ENCODE measurements at regions of chr17 and their contacts with region 1.

Region 1: GRCh38 chr17:58352014-58352842 is at the start of gene SUPT4H1:
- DNase-seq: peak; percentile 93
- ATAC-seq: peak; percentile 92
- H3K4me3 Mint-ChIP-seq: peak within 1 kb of the TSS; percentile 98
- H3K27ac Mint-ChIP-seq: peak within 1 kb of the TSS; percentile 96
- H3K4me1 Mint-ChIP-seq: peaks cover 50% of the 10 kb centered on the region
- H3K27me3 Mint-ChIP-seq: no peaks in the 10 kb centered on the region
- total RNA-seq, gene SUPT4H1: 63.3 to 127 TPM

Region 2: DNA sequence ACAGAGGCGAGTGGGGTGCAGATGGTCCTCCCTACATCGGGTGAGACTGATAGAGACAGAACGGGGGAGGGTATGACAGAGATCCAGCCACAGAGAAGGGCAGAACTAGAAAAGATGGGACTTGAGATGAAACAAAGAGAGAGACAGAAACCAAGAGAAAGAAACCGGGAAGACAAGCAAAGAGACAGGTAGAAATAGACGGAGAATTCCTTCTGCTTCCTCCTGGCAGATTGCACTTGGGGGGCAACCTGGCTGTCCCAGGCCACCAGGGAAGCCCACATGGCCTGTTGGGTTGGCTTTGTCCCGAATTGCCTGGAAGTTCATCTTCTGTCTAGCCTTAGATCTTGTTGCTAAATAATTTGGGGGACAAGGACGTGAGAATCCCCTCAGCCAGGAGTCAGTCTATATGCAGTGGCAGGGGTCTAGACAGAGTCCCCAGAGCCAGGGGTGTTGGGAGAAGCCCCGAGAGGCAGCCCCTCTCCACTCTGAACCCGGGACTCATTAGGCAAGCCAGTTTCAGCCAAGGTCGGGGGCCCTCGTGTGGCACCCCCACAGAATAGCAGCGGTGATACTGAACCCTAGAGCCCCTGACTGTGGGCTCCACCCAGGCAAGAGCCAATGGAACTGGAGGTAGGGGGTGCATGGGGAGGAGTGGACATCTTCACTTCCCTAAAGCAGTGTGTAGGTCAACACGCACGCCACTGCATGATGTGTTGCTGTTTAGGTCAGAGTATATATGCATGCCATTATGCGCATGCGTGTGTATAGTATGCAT is 23.0 kb before region 1 on chr17:
- CTCF ChIA-PET with region 1: interaction called, 21 read pairs
- DNase-seq: peak; percentile 94
- ATAC-seq: peak; percentile 25
- H3K4me3 Mint-ChIP-seq: peak overlapping the region; percentile 83
- H3K27ac Mint-ChIP-seq: peak overlapping the region; percentile 99
- H3K4me1 Mint-ChIP-seq: peaks cover 35% of the 10 kb centered on the region
- H3K27me3 Mint-ChIP-seq: peaks cover 3% of the 10 kb centered on the region

Region 3: GRCh38 chr17:58337600-58338453 is 14.4 kb before region 1 on chr17:
- CTCF ChIA-PET with region 1: interaction called, 69 read pairs
- DNase-seq: peak; percentile 98
- ATAC-seq: peak; percentile 70
- H3K4me3 Mint-ChIP-seq: peak overlapping the region; percentile 83
- H3K27ac Mint-ChIP-seq: peak overlapping the region; percentile 98
- H3K4me1 Mint-ChIP-seq: peaks cover 48% of the 10 kb centered on the region
- H3K27me3 Mint-ChIP-seq: no peaks in the 10 kb centered on the region

Region 4: GRCh38 chr17:58417300-58418092 is 65.3 kb after region 1 on chr17 and contains the start of gene RNF43:
- CTCF ChIA-PET with region 1: interaction called, 20 read pairs
- DNase-seq: peak; percentile 90
- ATAC-seq: peak; percentile 99
- H3K4me3 Mint-ChIP-seq: no peak within 1 kb of the TSS
- H3K27ac Mint-ChIP-seq: no peak within 1 kb of the TSS
- H3K4me1 Mint-ChIP-seq: peaks cover 24% of the 10 kb centered on the region
- H3K27me3 Mint-ChIP-seq: peaks cover 2% of the 10 kb centered on the region
- total RNA-seq, gene RNF43: 0.23 to 0.52 TPM